OCI-LY7 (cell line): ENCODE measurements at regions of chr15 and their contacts with region 1.

Region 1: GRCh38 chr15:71386448-71387236 is 271.4 kb downstream of the THSD4 start:
- DNase-seq: peak; percentile 31
- H3K4me3 ChIP-seq: no peak overlapping the region
- H3K27ac ChIP-seq: no peak overlapping the region
- H3K4me1 ChIP-seq: peaks cover 5% of the 10 kb centered on the region
- CTCF ChIP-seq: peak; percentile 74

Region 2: DNA sequence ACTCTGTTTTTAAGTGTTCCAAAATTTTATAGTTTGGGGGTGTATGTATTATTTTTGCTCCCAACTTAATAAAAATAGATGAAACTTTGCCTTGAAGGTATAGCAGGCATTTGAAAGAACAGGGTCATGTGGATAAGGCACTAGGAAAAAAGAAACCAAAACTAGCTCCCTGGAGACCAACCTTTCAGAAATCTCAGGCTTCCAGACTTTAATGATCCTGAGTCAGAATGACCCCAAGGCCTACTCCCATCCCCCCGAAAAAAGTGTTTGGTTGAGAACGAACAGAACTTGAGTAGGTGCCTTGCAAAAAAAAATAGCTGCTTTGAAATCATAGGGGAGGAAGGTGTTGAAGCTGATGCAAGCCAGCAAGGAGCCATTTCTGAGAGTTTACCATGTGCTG is 38.1 kb after region 1 on chr15:
- CTCF ChIA-PET with region 1: no interaction called
- POLR2A ChIA-PET with region 1: no interaction called
- intact Hi-C with region 1: no loop called
- DNase-seq: no peak
- H3K4me3 ChIP-seq: no peak overlapping the region
- H3K27ac ChIP-seq: no peak overlapping the region
- H3K4me1 ChIP-seq: no peaks in the 10 kb centered on the region
- CTCF ChIP-seq: no peak

Region 3: GRCh38 chr15:71440489-71441110 is 54.0 kb after region 1 on chr15:
- CTCF ChIA-PET with region 1: no interaction called
- POLR2A ChIA-PET with region 1: no interaction called
- intact Hi-C with region 1: loop called (anchors 2 kb)
- DNase-seq: peak; percentile 42
- H3K4me3 ChIP-seq: no peak overlapping the region
- H3K27ac ChIP-seq: no peak overlapping the region
- H3K4me1 ChIP-seq: no peaks in the 10 kb centered on the region
- CTCF ChIP-seq: peak; percentile 76

Region 4: GRCh38 chr15:71761649-71762369 is 375.2 kb after region 1 on chr15:
- CTCF ChIA-PET with region 1: no interaction called
- POLR2A ChIA-PET with region 1: no interaction called
- intact Hi-C with region 1: no loop called
- DNase-seq: no peak
- H3K4me3 ChIP-seq: no peak overlapping the region
- H3K27ac ChIP-seq: no peak overlapping the region
- H3K4me1 ChIP-seq: no peaks in the 10 kb centered on the region
- CTCF ChIP-seq: no peak